CD14-positive monocyte (primary cell): ENCODE measurements at regions of chr10 and their contacts with region 1.

Region 1: DNA sequence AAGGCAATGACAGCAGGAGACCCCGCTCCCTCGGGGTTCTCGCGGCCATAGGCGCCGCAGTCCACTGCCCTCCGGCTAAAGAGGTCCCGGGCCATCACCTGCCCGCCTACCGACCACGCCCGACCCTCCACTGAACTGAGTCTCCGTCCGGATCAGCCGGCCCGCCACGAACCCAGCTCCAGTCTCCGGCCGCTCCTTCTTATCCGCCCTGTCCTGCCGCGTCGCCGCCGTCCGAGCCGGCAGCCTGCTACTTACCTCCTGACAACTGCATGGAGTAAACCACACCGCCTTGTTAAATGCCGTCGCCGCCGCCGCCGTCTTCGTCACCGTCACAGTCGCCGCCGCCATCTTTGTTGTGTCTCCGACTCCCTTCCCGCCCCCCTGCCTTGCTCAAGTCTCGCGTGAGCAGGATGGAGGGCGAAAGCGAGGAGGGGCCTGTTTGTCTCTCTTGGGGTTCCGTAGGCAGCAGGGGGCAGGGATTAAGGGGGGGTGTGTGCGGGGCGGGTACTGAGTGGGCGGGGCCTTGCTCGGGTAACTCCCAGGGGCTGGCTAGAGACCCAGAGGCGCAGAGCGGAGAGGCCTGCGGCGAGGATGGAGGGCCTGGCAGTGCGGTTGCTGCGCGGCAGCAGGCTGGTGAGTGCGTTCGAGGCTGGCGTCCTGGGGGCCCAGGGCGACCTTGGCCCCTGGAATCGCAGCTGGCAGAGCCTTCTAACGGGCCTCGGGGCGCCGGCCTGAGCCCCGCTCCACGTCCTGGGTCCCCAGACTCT is at the starts of genes ACADSB and IKZF5:
- DNase-seq: peak; percentile 91 to 98 (median 98)
- H3K4me3 ChIP-seq: peak within 1 kb of the TSS; percentile 86 to 100 (median 93)
- H3K4me3 Mint-ChIP-seq: peak within 1 kb of the TSS; percentile 99 to 100
- H3K27ac ChIP-seq: peak within 1 kb of the TSS; percentile 96 to 97
- H3K27ac Mint-ChIP-seq: peak within 1 kb of the TSS; percentile 99 to 100 (median 100)
- H3K4me1 ChIP-seq: peaks cover 25 to 29% of the 10 kb centered on the region in 2 donors
- H3K4me1 Mint-ChIP-seq: peaks cover 28% of the 10 kb centered on the region
- H3K27me3 ChIP-seq: no peaks in the 10 kb centered on the region
- H3K27me3 Mint-ChIP-seq: peaks cover 0 to 3% (median 1%) of the 10 kb centered on the region in 3 donors
- CTCF ChIP-seq: no peak
- polyA plus RNA-seq, gene ACADSB: 3.9 to 14.7 (median 7.5) TPM
- polyA plus RNA-seq, gene IKZF5: 8.6 to 12.8 (median 9.8) TPM

Region 2: DNA sequence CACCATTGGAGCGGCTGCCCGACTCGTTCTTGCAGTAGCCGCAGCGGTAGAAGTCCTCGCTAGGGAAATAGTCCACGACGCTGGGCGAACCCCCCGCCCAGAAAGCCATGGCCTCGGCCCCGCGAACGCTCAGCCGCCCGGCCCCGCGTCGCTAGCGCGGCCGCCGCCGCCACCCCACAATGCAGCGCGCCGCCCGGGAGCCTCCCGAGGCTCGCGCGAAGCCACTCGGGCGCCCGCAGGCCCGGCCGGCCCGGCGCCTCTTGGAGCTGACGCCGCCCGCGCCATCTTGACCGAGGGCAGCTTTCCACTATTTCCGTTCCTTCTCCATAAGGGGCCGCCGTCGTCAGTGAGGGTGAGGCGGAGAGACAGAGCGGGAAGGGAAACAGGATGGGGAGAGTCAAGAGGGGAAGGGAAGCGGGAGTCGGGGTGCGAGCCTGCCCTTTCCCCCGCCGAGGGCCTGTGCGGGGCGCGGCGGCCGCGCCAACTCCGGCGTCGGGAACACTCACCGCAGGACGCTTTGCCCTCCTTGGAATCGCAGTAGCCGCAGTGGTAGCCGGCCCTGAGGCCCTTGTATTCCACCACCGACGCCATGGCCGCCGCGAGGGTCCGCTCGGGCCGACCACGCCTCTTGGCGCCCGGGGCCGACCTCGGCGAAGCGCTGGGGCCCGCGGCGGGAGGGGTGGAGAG is 1080.6 kb before region 1 on chr10 and contains the start of gene ATE1:
- intact Hi-C with region 1: loop called in 1 of 2 experiments (anchors 10 kb)
- DNase-seq: peak; percentile 74 to 82 (median 79)
- H3K4me3 ChIP-seq: peak within 1 kb of the TSS; percentile 79 to 97 (median 94)
- H3K4me3 Mint-ChIP-seq: peak within 1 kb of the TSS; percentile 94 to 95
- H3K27ac ChIP-seq: peak within 1 kb of the TSS; percentile 57 to 93
- H3K27ac Mint-ChIP-seq: peak within 1 kb of the TSS; percentile 85 to 96 (median 94)
- H3K4me1 ChIP-seq: peaks cover 16 to 21% of the 10 kb centered on the region in 2 donors
- H3K4me1 Mint-ChIP-seq: peaks cover 31% of the 10 kb centered on the region
- H3K27me3 ChIP-seq: no peaks in the 10 kb centered on the region
- H3K27me3 Mint-ChIP-seq: peaks cover 0 to 2% (median 0%) of the 10 kb centered on the region in 3 donors
- CTCF ChIP-seq: peak; percentile 17
- polyA plus RNA-seq, gene ATE1: 9.2 to 19.5 (median 15.8) TPM

Region 3: DNA sequence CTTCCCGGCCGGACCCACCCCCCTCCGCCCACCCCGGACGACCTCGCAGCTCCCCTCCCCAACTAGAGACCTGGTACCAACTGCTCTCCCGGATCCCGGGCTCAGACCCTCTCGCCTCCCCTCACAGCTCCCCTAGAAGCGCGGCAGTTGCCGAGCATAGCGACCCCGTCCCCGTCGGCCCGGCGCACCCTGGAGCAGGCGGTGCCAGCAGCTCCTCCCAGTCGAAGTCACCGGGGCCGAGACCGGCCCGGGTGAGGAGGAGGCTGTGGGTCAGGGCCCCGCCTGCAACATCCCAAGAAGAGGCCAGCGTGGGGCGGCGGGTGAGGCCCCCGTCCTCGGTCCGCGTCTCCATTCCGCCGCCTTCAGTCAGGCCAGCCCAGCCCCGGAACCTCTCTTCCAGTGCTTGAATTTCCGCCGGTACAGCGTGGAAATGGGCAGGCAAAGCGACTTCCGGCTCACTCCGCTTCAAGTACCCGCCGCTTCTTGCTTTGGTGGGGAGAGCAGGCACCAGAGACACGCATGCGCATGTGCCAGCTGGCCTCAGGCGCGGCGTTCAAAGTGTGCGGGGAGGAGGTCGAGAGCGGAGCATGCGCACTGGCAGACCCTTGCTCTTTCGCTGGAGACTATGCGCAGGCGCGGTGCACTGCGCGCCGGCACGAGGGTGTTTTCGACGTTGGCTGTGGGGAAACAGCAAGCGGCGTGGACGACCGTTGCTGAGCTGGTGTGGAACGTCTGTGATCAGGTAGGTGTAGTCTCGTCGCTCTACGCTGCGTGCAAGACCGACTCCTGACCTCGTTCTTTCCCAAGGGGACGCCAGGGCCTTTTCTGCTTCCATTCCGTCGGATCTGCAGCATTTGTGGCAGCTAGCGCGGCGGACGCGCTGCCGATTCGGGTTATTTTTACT is 54.5 kb before region 1 on chr10 and contains the start of gene C10orf88:
- intact Hi-C with region 1: loop called (anchors 2 kb)
- DNase-seq: peak; percentile 99
- H3K4me3 ChIP-seq: peak within 1 kb of the TSS; percentile 52 to 79 (median 69)
- H3K4me3 Mint-ChIP-seq: peak within 1 kb of the TSS; percentile 81 to 88
- H3K27ac ChIP-seq: peak within 1 kb of the TSS; percentile 46 to 75
- H3K27ac Mint-ChIP-seq: peak within 1 kb of the TSS; percentile 46 to 83 (median 64)
- H3K4me1 ChIP-seq: peaks cover 12 to 15% of the 10 kb centered on the region in 2 donors
- H3K4me1 Mint-ChIP-seq: peaks cover 18% of the 10 kb centered on the region
- H3K27me3 ChIP-seq: peaks cover 2 to 16% of the 10 kb centered on the region in 2 donors
- H3K27me3 Mint-ChIP-seq: peaks cover 9 to 17% (median 15%) of the 10 kb centered on the region in 3 donors
- CTCF ChIP-seq: no peak
- polyA plus RNA-seq, gene C10orf88: 2.2 to 2.9 (median 2.7) TPM

Region 4: DNA sequence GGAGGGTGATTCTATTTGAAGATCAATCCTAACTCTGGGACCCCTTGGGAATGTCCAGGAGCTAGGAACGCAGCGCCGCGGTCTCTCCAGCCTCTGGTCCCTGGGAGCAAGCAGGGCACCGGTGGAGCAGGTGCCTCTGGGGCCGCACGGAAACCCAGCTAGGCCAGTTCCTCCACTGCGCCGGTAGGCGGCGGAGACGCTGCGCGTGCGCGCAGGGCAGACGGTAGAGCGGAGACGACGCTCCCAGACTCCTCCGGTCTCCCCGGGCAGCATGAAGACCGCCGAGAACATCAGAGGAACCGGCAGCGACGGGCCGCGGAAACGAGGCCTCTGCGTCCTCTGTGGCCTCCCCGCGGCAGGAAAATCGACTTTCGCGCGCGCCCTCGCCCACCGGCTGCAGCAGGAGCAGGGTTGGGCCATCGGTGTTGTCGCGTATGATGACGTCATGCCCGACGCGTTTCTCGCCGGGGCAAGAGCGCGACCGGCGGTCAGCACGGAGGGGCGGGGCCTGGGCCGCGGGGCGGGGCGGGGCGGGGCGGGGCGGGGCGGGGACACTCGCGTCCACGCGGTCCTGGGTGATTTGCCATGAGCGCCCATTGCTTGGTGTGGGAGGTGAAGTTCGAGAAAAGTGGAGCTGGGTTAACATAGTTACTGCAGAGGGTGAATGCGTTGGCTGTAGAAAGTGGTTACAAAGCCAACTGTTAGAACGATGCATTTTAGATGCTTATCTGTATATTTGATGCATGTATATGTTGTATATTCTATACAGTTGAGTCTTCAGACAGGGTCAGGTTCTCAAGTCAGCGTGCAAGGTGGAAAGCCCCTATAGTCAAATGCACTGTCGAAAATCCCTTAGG is 28.2 kb before region 1 on chr10 and contains the start of gene PSTK:
- intact Hi-C with region 1: loop called (anchors 2 kb)
- DNase-seq: peak; percentile 88 to 95 (median 95)
- H3K4me3 ChIP-seq: peak within 1 kb of the TSS; percentile 78 to 94 (median 79)
- H3K4me3 Mint-ChIP-seq: peak within 1 kb of the TSS; percentile 84 to 90
- H3K27ac ChIP-seq: peak within 1 kb of the TSS; percentile 83 to 96
- H3K27ac Mint-ChIP-seq: peak within 1 kb of the TSS; percentile 91 to 98 (median 95)
- H3K4me1 ChIP-seq: peaks cover 14 to 16% of the 10 kb centered on the region in 2 donors
- H3K4me1 Mint-ChIP-seq: peaks cover 13% of the 10 kb centered on the region
- H3K27me3 ChIP-seq: peaks cover 3 to 6% of the 10 kb centered on the region in 2 donors
- H3K27me3 Mint-ChIP-seq: peaks cover 0 to 8% (median 3%) of the 10 kb centered on the region in 3 donors
- CTCF ChIP-seq: peak; percentile 97
- polyA plus RNA-seq, gene PSTK: 3.5 to 4.7 (median 4.2) TPM